ENCODE measurements at regions of chr1 and their contacts with region 1.

Region 1: DNA sequence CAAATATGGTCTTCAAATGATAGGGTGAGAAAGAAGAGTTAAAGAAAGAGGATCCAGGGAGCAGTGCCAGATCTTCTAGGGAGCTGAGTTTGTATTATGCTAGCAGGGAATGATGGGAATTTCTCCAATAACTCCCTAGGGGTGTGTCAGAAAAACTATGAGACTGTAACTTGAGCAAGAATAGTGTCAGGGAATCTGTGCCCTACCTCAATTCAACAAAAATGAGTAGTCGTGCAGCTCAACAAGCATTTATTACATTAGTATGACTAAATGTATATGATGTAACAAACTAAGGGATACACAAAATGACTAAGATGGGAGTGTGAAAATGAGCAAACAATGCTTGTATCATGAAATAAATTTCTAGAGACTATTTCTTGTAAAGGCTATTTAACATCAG is 24.2 kb downstream of the SPAG17 start:
- DNase-seq: no peak
- ATAC-seq: no peak
- H3K4me3 ChIP-seq: no peak overlapping the region
- H3K27ac ChIP-seq: no peak overlapping the region
- H3K4me1 ChIP-seq: no peaks in the 10 kb centered on the region
- H3K27me3 ChIP-seq: no peaks in the 10 kb centered on the region
- CTCF ChIP-seq: no peak

Region 2: DNA sequence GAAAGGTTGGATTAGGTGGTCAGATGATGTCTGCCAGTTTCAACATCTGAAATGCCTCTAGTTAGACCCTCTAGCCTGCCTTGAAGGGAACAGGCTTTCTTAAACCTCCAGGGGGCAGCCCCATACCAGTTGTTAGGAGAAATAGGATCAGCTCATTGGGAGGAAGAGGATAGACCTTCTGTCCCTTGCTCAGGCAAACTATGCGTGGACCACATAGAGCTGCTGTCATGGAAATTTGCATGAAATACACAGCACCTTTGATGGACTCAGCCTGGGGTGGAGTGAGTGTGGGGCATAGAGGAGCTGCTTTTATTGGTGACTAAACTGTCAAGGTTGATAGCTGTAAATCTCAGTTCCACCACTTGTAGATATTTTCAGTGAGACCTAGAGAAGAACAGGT is 62.6 kb after region 1 on chr1:
- intact Hi-C with region 1: loop called in 1 of 3 experiments (anchors 10 kb)
- DNase-seq: no peak
- ATAC-seq: no peak
- H3K4me3 ChIP-seq: no peak overlapping the region
- H3K27ac ChIP-seq: no peak overlapping the region
- H3K4me1 ChIP-seq: no peaks in the 10 kb centered on the region
- H3K27me3 ChIP-seq: no peaks in the 10 kb centered on the region
- CTCF ChIP-seq: no peak

Region 3: GRCh38 chr1:118335331-118335732 is 174.5 kb after region 1 on chr1:
- intact Hi-C with region 1: no loop called
- DNase-seq: no peak
- ATAC-seq: peak in 1 of 4 donors; percentile 63
- H3K4me3 ChIP-seq: no peak overlapping the region
- H3K27ac ChIP-seq: no peak overlapping the region
- H3K4me1 ChIP-seq: no peaks in the 10 kb centered on the region
- H3K27me3 ChIP-seq: no peaks in the 10 kb centered on the region
- CTCF ChIP-seq: no peak

Region 4: GRCh38 chr1:118659640-118660039 is 498.8 kb after region 1 on chr1:
- intact Hi-C with region 1: loop called in 1 of 3 experiments (anchors 10 kb)
- DNase-seq: no peak
- ATAC-seq: no peak
- H3K4me3 ChIP-seq: no peak overlapping the region
- H3K27ac ChIP-seq: no peak overlapping the region
- H3K4me1 ChIP-seq: no peaks in the 10 kb centered on the region
- H3K27me3 ChIP-seq: no peaks in the 10 kb centered on the region
- CTCF ChIP-seq: no peak